ENCODE measurements at regions of chr11 and their contacts with region 1.

Region 1: GRCh38 chr11:45860764-45861510 is 13.7 kb downstream of the CRY2 start:
- DNase-seq: no peak
- ATAC-seq: no peak
- H3K4me3 Mint-ChIP-seq: no peak overlapping the region
- H3K27ac Mint-ChIP-seq: no peak overlapping the region
- H3K4me1 Mint-ChIP-seq: no peaks in the 10 kb centered on the region
- H3K27me3 Mint-ChIP-seq: no peaks in the 10 kb centered on the region

Region 2: GRCh38 chr11:45796461-45796861 is 64.5 kb before region 1 on chr11:
- CTCF ChIA-PET with region 1: no interaction called
- POLR2A ChIA-PET with region 1: no interaction called
- DNase-seq: peak; percentile 19
- ATAC-seq: no peak
- H3K4me3 Mint-ChIP-seq: no peak overlapping the region
- H3K27ac Mint-ChIP-seq: no peak overlapping the region
- H3K4me1 Mint-ChIP-seq: peaks cover 2% of the 10 kb centered on the region
- H3K27me3 Mint-ChIP-seq: peaks cover 14% of the 10 kb centered on the region

Region 3: GRCh38 chr11:45806937-45807792 is 53.8 kb before region 1 on chr11:
- CTCF ChIA-PET with region 1: no interaction called
- POLR2A ChIA-PET with region 1: no interaction called
- DNase-seq: no peak
- ATAC-seq: no peak
- H3K4me3 Mint-ChIP-seq: peak overlapping the region; percentile 92
- H3K27ac Mint-ChIP-seq: no peak overlapping the region
- H3K4me1 Mint-ChIP-seq: peaks cover 47% of the 10 kb centered on the region
- H3K27me3 Mint-ChIP-seq: no peaks in the 10 kb centered on the region

Region 4: DNA sequence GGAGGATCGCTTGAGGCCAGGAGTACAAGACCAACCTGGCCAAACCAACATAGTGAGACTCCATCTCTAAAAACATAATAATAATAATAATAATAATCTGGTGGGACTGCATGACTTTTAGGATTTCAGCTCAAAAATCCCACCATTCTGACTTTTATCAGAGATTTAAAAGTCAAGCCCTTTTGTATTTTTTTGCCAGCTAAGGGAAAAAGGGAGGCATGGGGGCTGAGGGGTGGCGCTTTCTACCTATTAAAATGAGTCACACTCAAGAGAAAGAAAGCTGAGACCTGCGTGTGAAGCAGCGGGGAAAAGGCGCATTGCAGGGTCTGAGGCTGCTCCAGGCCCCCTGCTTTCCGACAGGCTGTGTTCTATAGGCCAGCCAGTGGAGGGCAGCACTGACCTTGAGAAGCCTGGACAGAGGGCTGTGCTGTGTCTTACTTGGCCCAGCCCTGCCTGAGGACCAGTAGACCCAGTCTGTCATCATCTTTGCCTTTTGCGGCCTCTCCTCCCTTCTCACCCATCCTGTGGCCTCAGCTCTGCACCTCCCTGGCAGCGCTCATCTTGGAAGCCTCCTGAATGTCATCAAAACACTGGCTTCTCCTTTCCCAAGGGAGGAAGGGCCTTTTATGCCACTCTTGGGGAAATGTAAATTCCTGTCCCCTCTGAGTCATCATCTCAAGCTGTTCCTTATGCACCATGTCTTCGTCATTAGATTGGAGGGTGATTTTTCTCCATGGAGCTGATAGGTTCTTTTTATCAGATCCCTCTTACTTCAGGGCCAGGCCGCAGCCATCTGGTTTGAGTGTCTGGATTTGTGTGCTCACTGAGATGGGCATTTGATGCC is 11.8 kb after region 1 on chr11:
- CTCF ChIA-PET with region 1: interaction called, 15 read pairs
- POLR2A ChIA-PET with region 1: no interaction called
- DNase-seq: peak; percentile 43
- ATAC-seq: peak; percentile 82
- H3K4me3 Mint-ChIP-seq: no peak overlapping the region
- H3K27ac Mint-ChIP-seq: no peak overlapping the region
- H3K4me1 Mint-ChIP-seq: no peaks in the 10 kb centered on the region
- H3K27me3 Mint-ChIP-seq: no peaks in the 10 kb centered on the region

Measured in activated CD8-positive, alpha-beta T cell treated with anti-CD3 and anti-CD28 coated beads, Interleukin-2, amount 10 ng/mL, durations not matched to agents 7 days and 5 days (primary cell).